ENCODE measurements at regions of chr17 and their contacts with region 1.

Region 1: GRCh38 chr17:68435876-68436842 is 21.1 kb downstream of the WIPI1 start:
- DNase-seq: peak; percentile 66
- ATAC-seq: peak; percentile 92
- H3K4me3 ChIP-seq: no peak overlapping the region
- H3K27ac ChIP-seq: peak overlapping the region; percentile 18; the same call in 1 of the 2 replicates
- H3K4me1 ChIP-seq: peaks cover 17 to 20% of the 10 kb centered on the region in 2 experiments
- H3K27me3 ChIP-seq: no peaks in the 10 kb centered on the region
- CTCF ChIP-seq: peak in 2 of 3 experiments; percentile 98 to 99
- POLR2A ChIP-seq: no peak
- RAD21 ChIP-seq: peak; percentile 94

Region 2: DNA sequence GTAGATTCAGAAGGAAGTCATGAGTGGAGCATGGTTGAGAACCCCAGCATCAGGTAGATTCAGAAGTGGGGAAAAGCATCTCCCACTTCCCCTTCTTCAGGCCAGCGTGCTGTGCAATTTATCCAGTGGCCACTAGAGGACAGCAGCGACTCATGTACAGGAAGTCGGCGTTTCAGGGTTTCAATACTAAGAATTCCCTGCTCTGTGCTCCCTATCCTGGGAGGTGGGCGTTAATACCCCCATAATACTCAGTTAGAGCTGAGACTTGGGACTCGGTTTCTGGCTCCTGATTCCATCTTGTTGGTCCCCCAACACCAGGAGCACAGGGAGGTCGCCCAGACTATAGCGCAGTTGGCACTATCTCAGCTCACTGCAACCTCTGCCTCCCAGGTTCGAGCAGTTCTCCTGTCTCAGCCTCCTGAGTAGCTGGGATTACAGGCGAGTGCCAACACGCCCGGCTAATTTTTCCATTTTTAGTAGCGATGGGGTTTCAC is 263.7 kb before region 1 on chr17:
- CTCF ChIA-PET with region 1: interaction called, 6 read pairs
- POLR2A ChIA-PET with region 1: no interaction called
- RAD21 ChIA-PET with region 1: no interaction called
- intact Hi-C with region 1: loop called (anchors 1 kb)
- DNase-seq: peak; percentile 63
- ATAC-seq: peak; percentile 88
- H3K4me3 ChIP-seq: no peak overlapping the region
- H3K27ac ChIP-seq: no peak overlapping the region
- H3K4me1 ChIP-seq: peaks cover 0 to 12% of the 10 kb centered on the region in 2 experiments; a peak in 3 of 4 replicates
- H3K27me3 ChIP-seq: no peaks in the 10 kb centered on the region
- CTCF ChIP-seq: peak; percentile 97 to 100 (median 99)
- POLR2A ChIP-seq: no peak
- RAD21 ChIP-seq: peak; percentile 100

Region 3: DNA sequence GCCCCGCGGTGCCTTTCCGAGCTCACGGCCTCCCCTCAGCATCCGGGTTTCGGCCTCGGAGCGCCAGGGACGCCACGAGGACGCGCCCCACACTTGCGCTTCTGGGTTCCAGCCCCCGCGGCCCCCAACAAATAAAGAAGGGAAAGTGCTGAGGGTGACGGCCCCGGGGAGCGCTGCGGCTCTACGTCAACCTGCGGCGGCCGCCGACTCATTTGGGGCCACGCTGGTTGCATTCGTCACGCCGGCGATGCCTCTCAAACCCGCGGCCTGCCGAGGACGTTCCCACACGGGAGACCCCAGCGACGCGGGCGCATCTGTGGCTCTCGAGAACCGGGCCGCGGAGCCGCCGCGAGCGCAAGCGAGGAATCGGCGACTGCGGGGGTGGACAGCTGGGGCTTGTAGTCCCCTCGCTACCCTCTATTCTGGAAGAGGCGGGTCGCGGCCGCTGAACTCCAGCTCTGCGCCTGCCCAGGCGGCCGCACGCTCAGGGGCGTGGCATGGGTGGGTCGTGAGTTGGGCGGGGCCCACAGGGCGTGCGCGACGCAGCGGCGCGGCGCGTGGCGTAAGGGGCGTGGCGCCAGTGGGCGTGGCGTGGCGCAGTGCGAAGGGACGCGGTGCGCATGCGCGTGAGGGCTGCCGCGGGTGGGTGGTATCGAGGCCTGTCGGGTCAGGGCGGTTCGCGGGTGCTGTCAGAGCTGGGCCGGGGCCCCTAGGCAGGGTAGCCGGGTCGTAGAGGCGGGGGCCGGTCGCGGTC is 188.5 kb before region 1 on chr17 and contains the start of gene AMZ2:
- CTCF ChIA-PET with region 1: interaction called, 5 read pairs
- POLR2A ChIA-PET with region 1: interaction called, 3 read pairs
- RAD21 ChIA-PET with region 1: interaction called in 1 of 2 experiments, 3 read pairs
- intact Hi-C with region 1: loop called (anchors 5 kb)
- DNase-seq: peak; percentile 88
- ATAC-seq: peak; percentile 95
- H3K4me3 ChIP-seq: peak within 1 kb of the TSS; percentile 62 to 67
- H3K27ac ChIP-seq: peak within 1 kb of the TSS; percentile 91
- H3K4me1 ChIP-seq: peaks cover 14 to 29% of the 10 kb centered on the region in 2 experiments; a peak in 3 of 4 replicates
- H3K27me3 ChIP-seq: no peaks in the 10 kb centered on the region
- CTCF ChIP-seq: no peak
- POLR2A ChIP-seq: peak; percentile 96
- RAD21 ChIP-seq: peak; percentile 5; the same call in 1 of the 2 replicates
- total RNA-seq, gene AMZ2: 131 TPM

Region 4: GRCh38 chr17:68398691-68399637 is 37.2 kb before region 1 on chr17:
- CTCF ChIA-PET with region 1: interaction called, 13 read pairs
- POLR2A ChIA-PET with region 1: no interaction called
- RAD21 ChIA-PET with region 1: interaction called, 3 to 4 read pairs
- intact Hi-C with region 1: no loop called
- DNase-seq: peak; percentile 72
- ATAC-seq: peak; percentile 94
- H3K4me3 ChIP-seq: no peak overlapping the region
- H3K27ac ChIP-seq: peak overlapping the region; percentile 43
- H3K4me1 ChIP-seq: peaks cover 27 to 35% of the 10 kb centered on the region in 2 experiments
- H3K27me3 ChIP-seq: no peaks in the 10 kb centered on the region
- CTCF ChIP-seq: peak; percentile 97 to 99 (median 99)
- POLR2A ChIP-seq: no peak
- RAD21 ChIP-seq: peak; percentile 99

Region 5: GRCh38 chr17:68457539-68458259 is 21.5 kb after region 1 on chr17:
- CTCF ChIA-PET with region 1: interaction called, 24 read pairs
- POLR2A ChIA-PET with region 1: no interaction called
- RAD21 ChIA-PET with region 1: interaction called, 3 to 4 read pairs
- intact Hi-C with region 1: no loop called
- DNase-seq: peak; percentile 98
- ATAC-seq: peak; percentile 86
- H3K4me3 ChIP-seq: peak overlapping the region; percentile 39 to 57
- H3K27ac ChIP-seq: no peak overlapping the region
- H3K4me1 ChIP-seq: peaks cover 21 to 39% of the 10 kb centered on the region in 2 experiments
- H3K27me3 ChIP-seq: no peaks in the 10 kb centered on the region
- CTCF ChIP-seq: no peak
- POLR2A ChIP-seq: no peak
- RAD21 ChIP-seq: no peak

Measured in HCT116 (cell line).